Prostate gland (tissue), 2 donors: ENCODE measurements at regions of chr17 and their contacts with region 1.

Region 1: GRCh38 chr17:31702041-31702440 is 157.0 kb downstream of the COPRS start:
- DNase-seq: no peak
- H3K4me3 ChIP-seq: no peak overlapping the region
- H3K27ac ChIP-seq: no peak overlapping the region
- H3K4me1 ChIP-seq: no peaks in the 10 kb centered on the region
- H3K27me3 ChIP-seq: no peaks in the 10 kb centered on the region
- CTCF ChIP-seq: no peak
- POLR2A ChIP-seq: no peak

Region 2: GRCh38 chr17:31394544-31394943 is 307.5 kb before region 1 on chr17:
- intact Hi-C with region 1: no loop called
- DNase-seq: no peak
- H3K4me3 ChIP-seq: no peak overlapping the region
- H3K27ac ChIP-seq: no peak overlapping the region
- H3K4me1 ChIP-seq: no peaks in the 10 kb centered on the region
- H3K27me3 ChIP-seq: peaks cover 4% of the 10 kb centered on the region
- CTCF ChIP-seq: no peak
- POLR2A ChIP-seq: no peak

Region 3: GRCh38 chr17:31722251-31723056 is 20.4 kb after region 1 on chr17:
- intact Hi-C with region 1: loop called (anchors 2 kb)
- DNase-seq: no peak
- H3K4me3 ChIP-seq: no peak overlapping the region
- H3K27ac ChIP-seq: no peak overlapping the region
- H3K4me1 ChIP-seq: no peaks in the 10 kb centered on the region
- H3K27me3 ChIP-seq: no peaks in the 10 kb centered on the region
- CTCF ChIP-seq: no peak
- POLR2A ChIP-seq: no peak